ENCODE measurements at regions of chr5 and their contacts with region 1.

Region 1: DNA sequence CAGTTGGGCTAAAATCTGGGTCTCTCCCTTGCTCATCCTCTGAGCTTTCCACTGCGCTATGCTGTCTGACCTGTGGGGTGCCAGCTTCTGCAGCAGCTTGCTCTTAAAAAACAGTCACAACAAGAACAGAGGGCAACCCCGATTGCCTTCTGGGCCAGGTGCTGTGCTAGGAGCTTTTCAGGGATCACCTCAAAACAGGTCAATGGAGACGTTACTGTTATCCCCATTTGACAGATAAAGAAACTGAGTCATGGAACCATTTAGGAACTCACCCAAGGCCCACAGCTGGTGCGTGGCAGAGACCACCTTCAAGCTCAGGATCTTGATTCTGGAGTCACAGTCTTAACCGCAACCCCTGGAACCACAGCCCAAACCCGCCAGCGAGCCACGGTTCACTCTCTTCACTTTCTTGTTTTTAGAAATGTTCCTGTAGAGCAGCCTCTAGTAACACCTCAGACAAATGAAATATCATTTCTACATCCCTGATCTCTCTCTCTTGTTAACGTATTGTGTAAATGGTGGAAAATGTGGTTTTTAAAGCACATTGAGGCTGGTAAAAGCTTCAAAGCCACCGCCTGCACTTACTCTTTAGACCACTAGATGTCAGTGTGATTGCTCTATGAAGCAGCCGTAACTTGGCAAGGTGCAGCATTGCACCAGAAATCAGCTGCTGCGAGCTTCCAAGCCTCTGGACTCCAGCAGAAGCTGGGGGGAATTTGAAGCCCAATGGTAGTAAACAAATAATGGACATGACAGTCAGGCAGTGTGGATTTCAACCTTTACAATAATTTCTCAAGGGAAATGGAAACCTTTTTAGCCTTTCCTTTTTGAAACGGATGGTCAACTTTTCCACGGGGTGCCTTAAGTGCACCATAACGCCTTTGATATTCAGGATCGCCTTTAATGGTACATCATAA is 1.7 kb downstream of the FYB1 start:
- DNase-seq: no peak
- ATAC-seq: peak; percentile 77
- H3K4me3 Mint-ChIP-seq: no peak overlapping the region
- H3K27ac Mint-ChIP-seq: no peak overlapping the region
- H3K4me1 Mint-ChIP-seq: no peaks in the 10 kb centered on the region
- H3K27me3 Mint-ChIP-seq: peaks cover 5% of the 10 kb centered on the region
- CTCF ChIP-seq: peak; percentile 86

Region 2: DNA sequence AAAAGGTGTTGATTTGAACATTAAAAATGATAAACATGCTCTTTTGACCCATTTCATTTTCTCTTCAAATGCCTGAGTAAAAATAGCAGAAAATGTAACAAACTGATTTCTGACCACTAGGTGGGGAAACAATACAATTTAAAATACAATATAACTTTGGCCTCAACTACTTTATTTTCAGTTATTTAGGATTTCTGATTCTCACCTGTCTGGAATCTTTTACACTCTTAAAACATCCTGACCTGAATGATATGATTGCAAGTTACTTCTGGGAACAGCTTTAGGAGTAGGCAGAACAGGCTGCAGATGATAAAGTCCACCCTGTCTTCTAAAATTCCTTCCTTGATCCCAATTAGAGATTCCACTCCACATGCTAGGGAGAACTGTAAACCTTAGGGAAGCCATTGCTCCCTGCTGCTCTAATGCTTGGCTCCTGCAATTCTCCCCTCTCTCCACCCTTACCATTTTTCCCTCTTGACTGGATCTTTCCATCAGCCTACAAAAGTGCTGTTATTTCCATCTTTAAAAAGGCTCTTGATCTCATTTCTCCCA is 68.6 kb before region 1 on chr5:
- CTCF ChIA-PET with region 1: interaction called, 4 read pairs
- POLR2A ChIA-PET with region 1: no interaction called
- intact Hi-C with region 1: loop called (anchors 2 kb)
- DNase-seq: no peak
- ATAC-seq: no peak
- H3K4me3 Mint-ChIP-seq: no peak overlapping the region
- H3K27ac Mint-ChIP-seq: no peak overlapping the region
- H3K4me1 Mint-ChIP-seq: peaks cover 27% of the 10 kb centered on the region
- H3K27me3 Mint-ChIP-seq: no peaks in the 10 kb centered on the region
- CTCF ChIP-seq: no peak

Region 3: DNA sequence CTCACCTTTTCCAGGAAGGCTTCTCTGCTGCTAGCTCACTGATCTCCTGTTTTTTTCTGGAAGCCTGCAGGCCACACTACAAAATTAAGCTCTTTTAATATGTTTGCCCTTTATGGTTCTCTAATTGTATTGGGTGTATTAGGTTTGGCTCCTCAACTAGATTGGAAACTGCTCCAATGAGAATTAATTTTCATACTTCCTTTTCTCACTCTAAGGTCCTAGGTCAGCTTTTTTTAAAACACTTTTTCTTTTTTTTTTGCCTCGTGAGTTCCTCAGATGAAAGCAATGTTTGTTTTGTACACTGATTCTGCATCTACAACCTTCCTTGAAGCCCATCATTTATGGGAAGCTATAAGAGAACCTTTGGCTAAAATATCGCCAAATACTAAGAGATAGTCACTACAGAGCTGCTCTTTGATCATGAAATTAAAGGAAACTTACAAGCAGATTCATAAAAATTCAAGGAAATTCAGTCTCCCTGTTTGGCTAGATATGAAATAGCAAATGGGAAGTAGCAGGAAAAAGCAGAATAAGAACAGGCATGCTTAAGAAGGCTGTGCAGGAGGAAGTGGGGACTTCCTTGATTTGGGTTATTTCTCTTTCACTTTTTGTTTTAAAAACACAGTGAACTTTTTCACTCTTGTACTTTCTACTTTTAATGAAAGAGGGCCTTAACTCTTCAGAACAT is 56.9 kb after region 1 on chr5:
- CTCF ChIA-PET with region 1: interaction called, 11 read pairs
- POLR2A ChIA-PET with region 1: no interaction called
- intact Hi-C with region 1: no loop called
- DNase-seq: no peak
- ATAC-seq: peak; percentile 80
- H3K4me3 Mint-ChIP-seq: peak overlapping the region; percentile 81
- H3K27ac Mint-ChIP-seq: peak overlapping the region; percentile 94
- H3K4me1 Mint-ChIP-seq: peaks cover 32% of the 10 kb centered on the region
- H3K27me3 Mint-ChIP-seq: no peaks in the 10 kb centered on the region
- CTCF ChIP-seq: no peak

Region 4: DNA sequence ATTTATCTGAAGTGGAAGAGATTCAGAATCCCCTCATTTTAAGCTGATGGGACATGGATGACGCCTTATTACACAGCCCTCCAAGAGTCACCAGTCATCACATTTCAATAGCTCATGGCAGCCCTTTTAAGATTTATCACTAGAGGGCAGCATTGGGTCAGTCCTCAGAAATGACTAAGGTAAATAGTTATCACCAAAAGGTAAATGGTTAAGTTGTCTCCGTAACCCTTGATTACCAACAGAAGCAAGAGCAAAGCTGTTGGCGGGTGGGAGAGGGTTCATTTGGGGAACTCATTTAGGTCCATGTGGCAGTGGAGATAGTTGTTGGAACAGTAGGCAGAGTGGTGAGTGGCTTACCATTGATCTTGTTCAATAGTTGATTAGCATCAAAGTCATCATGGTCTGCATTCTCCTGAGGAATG is 158.7 kb after region 1 on chr5:
- CTCF ChIA-PET with region 1: interaction called, 12 read pairs
- POLR2A ChIA-PET with region 1: no interaction called
- intact Hi-C with region 1: loop called (anchors 5 kb)
- DNase-seq: no peak
- ATAC-seq: peak; percentile 45
- H3K4me3 Mint-ChIP-seq: no peak overlapping the region
- H3K27ac Mint-ChIP-seq: no peak overlapping the region
- H3K4me1 Mint-ChIP-seq: no peaks in the 10 kb centered on the region
- H3K27me3 Mint-ChIP-seq: no peaks in the 10 kb centered on the region
- CTCF ChIP-seq: no peak

Region 5: DNA sequence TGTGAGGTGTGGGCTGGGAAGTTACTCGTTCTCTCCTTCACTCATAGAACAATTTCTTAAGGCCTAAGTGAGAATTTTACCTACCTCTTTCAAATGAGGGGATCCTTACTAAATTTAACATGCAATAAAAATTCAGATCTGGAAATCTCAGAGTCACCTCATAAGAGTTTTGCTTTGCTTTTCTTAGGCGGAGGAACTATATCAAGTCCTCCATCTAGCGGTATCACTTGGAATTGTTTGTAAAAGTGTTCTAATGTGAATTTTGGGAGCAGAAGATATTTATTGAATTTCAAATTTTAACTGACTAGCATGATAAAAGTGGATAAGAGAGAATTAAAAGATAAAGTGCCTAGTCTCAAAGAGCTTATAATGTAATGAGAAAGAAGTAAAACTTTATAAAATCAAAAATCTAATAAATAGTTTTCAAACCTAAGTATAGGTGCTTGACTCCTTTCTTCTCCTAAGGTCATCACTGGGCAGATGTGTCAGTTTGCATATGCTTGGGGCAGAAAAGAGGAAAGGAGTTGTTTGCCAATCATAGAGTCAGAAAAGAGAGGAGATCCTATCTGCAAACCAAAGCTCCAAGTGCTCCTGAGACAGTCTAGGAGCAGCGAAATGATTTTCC is 352.9 kb after region 1 on chr5:
- CTCF ChIA-PET with region 1: interaction called, 3 read pairs
- POLR2A ChIA-PET with region 1: no interaction called
- intact Hi-C with region 1: loop called (anchors 1 kb)
- DNase-seq: no peak
- ATAC-seq: no peak
- H3K4me3 Mint-ChIP-seq: no peak overlapping the region
- H3K27ac Mint-ChIP-seq: no peak overlapping the region
- H3K4me1 Mint-ChIP-seq: no peaks in the 10 kb centered on the region
- H3K27me3 Mint-ChIP-seq: peaks cover 8% of the 10 kb centered on the region
- CTCF ChIP-seq: no peak

Region 6: GRCh38 chr5:39846144-39846543 is 628.5 kb after region 1 on chr5:
- CTCF ChIA-PET with region 1: no interaction called
- POLR2A ChIA-PET with region 1: no interaction called
- intact Hi-C with region 1: no loop called
- DNase-seq: no peak
- ATAC-seq: no peak
- H3K4me3 Mint-ChIP-seq: no peak overlapping the region
- H3K27ac Mint-ChIP-seq: no peak overlapping the region
- H3K4me1 Mint-ChIP-seq: no peaks in the 10 kb centered on the region
- H3K27me3 Mint-ChIP-seq: peaks cover 5% of the 10 kb centered on the region
- CTCF ChIP-seq: no peak